ENCODE measurements at regions of chr9 and their contacts with region 1.

Region 1: DNA sequence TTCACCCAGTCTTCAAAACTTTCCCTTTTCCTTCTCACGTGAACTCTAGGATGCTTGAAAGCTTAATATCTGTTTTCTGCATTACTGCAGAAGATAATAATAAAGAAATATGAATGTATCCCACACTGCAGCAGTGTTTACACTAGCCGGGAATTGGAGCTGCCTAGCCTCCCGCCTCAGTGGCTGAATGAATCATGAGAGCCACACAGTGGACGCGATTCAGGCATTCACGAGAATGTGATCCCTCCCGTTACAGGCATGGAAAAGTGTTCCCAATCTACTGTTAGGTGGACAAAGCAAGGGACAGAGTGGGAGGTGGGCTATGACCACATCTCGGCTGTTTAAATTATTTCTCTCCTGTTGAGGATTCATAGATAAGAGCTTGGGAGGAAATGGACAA is 69.4 kb upstream of the CTSL start:
- DNase-seq: no peak
- H3K4me3 ChIP-seq: no peak overlapping the region
- H3K27ac ChIP-seq: no peak overlapping the region
- H3K4me1 ChIP-seq: peaks cover 0 to 1% of the 10 kb centered on the region in 2 experiments; a peak in 2 of 4 replicates
- H3K27me3 ChIP-seq: no peaks in the 10 kb centered on the region; the same call in 1 of the 2 replicates
- CTCF ChIP-seq: no peak
- EP300 ChIP-seq: no peak
- RAD21 ChIP-seq: peak; percentile 24; the same call in 1 of the 2 replicates

Region 2: DNA sequence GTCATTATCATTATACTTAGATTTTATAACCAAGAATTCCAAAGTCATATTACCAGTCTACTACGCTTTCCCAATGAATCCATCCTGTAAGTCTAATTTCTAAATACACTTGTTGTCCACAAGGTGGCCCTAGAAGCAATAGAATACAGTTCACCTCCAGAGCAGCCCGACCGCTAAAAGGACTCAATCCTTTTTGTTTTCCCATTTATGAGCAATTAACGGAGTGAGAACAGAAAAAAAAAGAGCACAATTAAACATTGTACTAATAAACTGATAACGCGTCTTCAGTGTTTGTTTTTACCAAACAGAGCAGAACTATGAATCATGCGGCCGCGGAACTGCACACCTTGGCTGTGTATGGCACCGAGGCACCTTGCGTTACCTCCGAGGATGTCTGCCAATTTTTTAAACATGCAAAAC is 319.6 kb before region 1 on chr9:
- CTCF ChIA-PET with region 1: interaction called, 56 read pairs
- POLR2A ChIA-PET with region 1: no interaction called
- DNase-seq: peak; percentile 60
- H3K4me3 ChIP-seq: peak overlapping the region; percentile 53 to 64
- H3K27ac ChIP-seq: no peak overlapping the region
- H3K4me1 ChIP-seq: peaks cover 9 to 11% of the 10 kb centered on the region in 2 experiments; a peak in 2 of 4 replicates
- H3K27me3 ChIP-seq: peaks cover 6% of the 10 kb centered on the region; the same call in 1 of the 2 replicates
- CTCF ChIP-seq: peak; percentile 76
- EP300 ChIP-seq: no peak; a peak in 1 of 4 replicates
- RAD21 ChIP-seq: peak; percentile 94